Left ventricle myocardium inferior (tissue), 1 donor: ENCODE measurements at regions of chr12 and their contacts with region 1.

Region 1: GRCh38 chr12:88993651-88994050 is 358.6 kb downstream of the DUSP6 start:
- DNase-seq: no peak
- H3K4me3 ChIP-seq: no peak overlapping the region
- H3K27ac ChIP-seq: no peak overlapping the region
- H3K4me1 ChIP-seq: no peaks in the 10 kb centered on the region
- H3K27me3 ChIP-seq: no peaks in the 10 kb centered on the region
- CTCF ChIP-seq: peak; percentile 73

Region 2: DNA sequence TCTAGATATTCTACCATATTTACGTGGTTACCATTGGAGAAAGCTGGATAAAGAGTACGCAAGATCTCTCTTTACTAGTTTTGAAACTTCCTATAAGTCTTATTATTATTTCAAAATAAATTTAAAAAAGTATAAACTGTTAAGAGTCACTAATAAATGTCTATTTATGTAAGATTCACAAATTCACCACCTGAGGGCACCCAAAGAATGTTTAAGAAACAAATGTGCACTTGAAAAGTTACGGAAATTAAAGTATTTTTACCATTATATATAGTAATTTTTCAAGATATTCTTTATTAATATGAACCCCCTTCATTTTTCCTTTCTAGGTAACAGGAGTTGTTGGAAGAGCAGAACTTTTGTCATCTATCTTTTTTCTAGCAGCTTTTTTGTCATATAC is 839.7 kb before region 1 on chr12:
- intact Hi-C with region 1: loop called (anchors 10 kb)
- DNase-seq: no peak
- H3K4me3 ChIP-seq: no peak overlapping the region
- H3K27ac ChIP-seq: no peak overlapping the region
- H3K4me1 ChIP-seq: no peaks in the 10 kb centered on the region
- H3K27me3 ChIP-seq: no peaks in the 10 kb centered on the region
- CTCF ChIP-seq: peak; percentile 42

Region 3: GRCh38 chr12:88580051-88580871 is 413.4 kb before region 1 on chr12 and contains the start of gene KITLG:
- intact Hi-C with region 1: loop called (anchors 10 kb)
- DNase-seq: peak; percentile 83
- H3K4me3 ChIP-seq: peak within 1 kb of the TSS; percentile 82
- H3K27ac ChIP-seq: peak within 1 kb of the TSS; percentile 90
- H3K4me1 ChIP-seq: peaks cover 48% of the 10 kb centered on the region
- H3K27me3 ChIP-seq: peaks cover 12% of the 10 kb centered on the region
- CTCF ChIP-seq: peak; percentile 52
- total RNA-seq, gene KITLG: 8.6 TPM